ENCODE measurements at regions of chr18 and their contacts with region 1.

Region 1: DNA sequence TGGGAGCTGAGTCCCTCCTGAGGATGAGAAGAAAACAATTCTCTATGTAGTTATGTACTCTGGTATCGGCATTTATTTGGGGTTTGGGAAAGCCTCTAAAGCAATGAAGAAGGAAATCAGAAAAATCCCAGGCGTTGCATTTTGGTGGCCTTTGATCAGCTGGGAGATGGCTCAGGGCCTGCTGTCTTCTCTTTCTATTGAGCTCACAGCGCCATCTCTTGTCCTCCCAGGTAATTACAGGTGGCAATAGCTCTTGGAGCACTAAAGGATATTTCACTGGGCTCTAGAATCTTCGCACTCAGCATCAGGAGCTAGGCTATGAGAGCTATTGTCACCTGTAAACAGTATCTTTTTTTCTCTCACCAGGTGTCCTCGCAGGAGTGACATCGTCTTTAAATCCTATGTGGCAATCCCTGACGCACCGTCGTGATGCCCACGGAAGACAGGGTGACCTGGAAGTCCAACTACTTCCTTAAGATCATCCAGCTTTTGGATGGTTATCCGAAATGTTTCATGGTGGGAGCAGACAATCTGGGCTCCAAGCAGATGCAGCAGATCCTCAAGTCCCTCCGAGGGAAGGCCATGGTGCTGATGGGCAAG is 76.1 kb upstream of the PMAIP1 start:
- DNase-seq: peak; percentile 65
- H3K4me3 ChIP-seq: no peak overlapping the region
- H3K27ac ChIP-seq: no peak overlapping the region
- H3K4me1 ChIP-seq: no peaks in the 10 kb centered on the region
- H3K27me3 ChIP-seq: no peaks in the 10 kb centered on the region
- CTCF ChIP-seq: peak; percentile 38 to 84 (median 68)
- POLR2A ChIP-seq: no peak

Region 2: DNA sequence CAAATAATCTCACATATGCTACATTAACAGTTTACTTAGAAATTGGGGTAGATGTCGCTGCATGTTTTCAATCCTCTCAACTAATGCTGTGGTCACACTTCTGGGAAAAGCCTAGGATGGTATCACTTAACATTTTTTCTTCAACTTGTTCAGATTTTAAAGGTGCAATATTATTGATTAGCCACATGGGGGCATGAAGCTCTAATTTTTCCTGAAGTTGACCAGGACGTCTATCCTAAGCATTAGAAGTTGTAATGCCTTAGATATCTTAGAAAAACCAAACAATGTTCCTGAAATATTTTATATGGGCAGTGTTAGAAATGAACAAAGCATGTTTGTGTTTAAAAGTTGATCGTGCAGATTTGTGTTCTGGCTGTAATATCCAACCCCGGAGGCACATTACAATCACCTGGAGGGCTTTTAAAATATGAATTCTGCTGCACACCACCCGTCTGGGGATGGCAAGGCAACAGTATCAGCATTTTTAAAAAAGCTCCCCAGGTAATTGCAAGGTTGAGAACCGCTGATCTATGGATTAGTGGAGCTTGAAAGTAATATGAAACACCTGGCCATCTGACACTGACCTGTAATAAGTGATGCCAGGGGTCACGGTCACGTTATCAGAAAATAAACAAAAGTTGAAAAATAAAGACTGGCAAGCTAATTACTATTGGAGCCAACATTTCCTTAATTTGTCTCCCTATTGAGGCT is 364.2 kb before region 1 on chr18:
- intact Hi-C with region 1: loop called (anchors 1 kb)
- DNase-seq: no peak
- H3K4me3 ChIP-seq: no peak overlapping the region
- H3K27ac ChIP-seq: no peak overlapping the region
- H3K4me1 ChIP-seq: no peaks in the 10 kb centered on the region
- H3K27me3 ChIP-seq: no peaks in the 10 kb centered on the region
- CTCF ChIP-seq: peak; percentile 23 to 73 (median 70)
- POLR2A ChIP-seq: no peak

Region 3: GRCh38 chr18:59631583-59632181 is 192.0 kb before region 1 on chr18:
- intact Hi-C with region 1: loop called (anchors 2 kb)
- DNase-seq: no peak
- H3K4me3 ChIP-seq: no peak overlapping the region
- H3K27ac ChIP-seq: no peak overlapping the region
- H3K4me1 ChIP-seq: no peaks in the 10 kb centered on the region
- H3K27me3 ChIP-seq: no peaks in the 10 kb centered on the region
- CTCF ChIP-seq: peak in 3 of 4 experiments; percentile 25 to 32 (median 28)
- POLR2A ChIP-seq: no peak

Region 4: DNA sequence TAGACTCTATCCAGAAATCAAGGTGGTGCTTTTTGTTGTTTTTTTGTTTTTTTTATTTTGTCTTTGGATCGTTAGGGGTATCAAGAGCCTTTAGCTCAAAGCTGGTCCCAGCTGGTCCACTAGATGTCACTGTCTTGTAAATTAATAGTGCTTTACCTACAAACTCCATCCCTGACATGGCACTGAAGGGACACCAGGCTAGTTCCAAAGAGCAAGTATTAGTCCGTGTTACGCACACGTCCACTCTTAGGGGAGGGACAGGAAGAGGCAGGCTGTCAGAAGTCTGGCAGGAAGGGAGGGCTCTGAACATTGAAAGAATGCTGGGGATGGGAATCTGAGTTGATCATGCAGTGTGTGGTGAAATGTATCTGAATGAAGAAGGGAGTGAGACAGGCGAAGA is 40.6 kb before region 1 on chr18:
- intact Hi-C with region 1: loop called (anchors 5 kb)
- DNase-seq: no peak
- H3K4me3 ChIP-seq: no peak overlapping the region
- H3K27ac ChIP-seq: no peak overlapping the region
- H3K4me1 ChIP-seq: no peaks in the 10 kb centered on the region
- H3K27me3 ChIP-seq: no peaks in the 10 kb centered on the region
- CTCF ChIP-seq: peak in 2 of 4 experiments; percentile 10 to 28
- POLR2A ChIP-seq: no peak

Measured in prostate gland (tissue), 2 donors.